Posterior cingulate gyrus (tissue), 11 donors: ENCODE measurements at regions of chr11 and their contacts with region 1.

Region 1: GRCh38 chr11:447923-448731 is 2.0 kb upstream of the PTDSS2 start:
- DNase-seq: peak; percentile 85 to 99 (median 92)

Region 2: DNA sequence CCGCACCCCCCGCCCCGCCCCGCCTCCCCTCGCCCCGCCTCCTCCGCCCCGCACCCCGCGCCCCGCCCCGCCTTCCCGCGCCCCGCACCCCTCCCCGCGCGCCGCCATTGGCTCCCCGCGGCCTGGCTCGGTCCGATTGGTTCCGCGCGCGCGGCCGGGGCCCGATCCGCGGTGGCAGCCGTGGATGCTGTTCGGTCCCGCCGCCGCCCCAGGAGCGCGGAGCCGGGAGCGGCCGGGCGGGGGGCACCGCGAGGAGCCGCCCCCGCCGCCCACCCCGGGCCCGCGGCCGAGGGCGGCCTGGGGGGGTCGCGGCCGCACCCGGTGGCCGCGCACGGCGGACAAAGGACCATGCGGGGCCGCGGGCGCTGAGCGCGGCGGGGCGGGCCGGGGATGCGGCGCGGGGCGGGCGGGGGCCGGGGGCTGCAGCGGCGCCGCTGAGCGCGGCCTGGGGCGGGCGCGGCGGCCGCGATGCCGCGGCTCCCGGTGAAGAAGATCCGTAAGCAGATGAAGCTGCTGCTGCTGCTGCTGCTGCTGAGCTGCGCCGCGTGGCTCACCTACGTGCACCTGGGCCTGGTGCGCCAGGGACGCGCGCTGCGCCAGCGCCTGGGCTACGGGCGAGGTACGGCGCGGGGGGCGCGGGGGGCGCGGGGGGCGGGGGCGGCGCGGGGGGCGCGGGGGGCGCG is 78.7 kb before region 1 on chr11 and contains the start of gene B4GALNT4:
- intact Hi-C with region 1: loop called (anchors 5 kb)
- DNase-seq: peak; percentile 48 to 97 (median 78)

Region 3: DNA sequence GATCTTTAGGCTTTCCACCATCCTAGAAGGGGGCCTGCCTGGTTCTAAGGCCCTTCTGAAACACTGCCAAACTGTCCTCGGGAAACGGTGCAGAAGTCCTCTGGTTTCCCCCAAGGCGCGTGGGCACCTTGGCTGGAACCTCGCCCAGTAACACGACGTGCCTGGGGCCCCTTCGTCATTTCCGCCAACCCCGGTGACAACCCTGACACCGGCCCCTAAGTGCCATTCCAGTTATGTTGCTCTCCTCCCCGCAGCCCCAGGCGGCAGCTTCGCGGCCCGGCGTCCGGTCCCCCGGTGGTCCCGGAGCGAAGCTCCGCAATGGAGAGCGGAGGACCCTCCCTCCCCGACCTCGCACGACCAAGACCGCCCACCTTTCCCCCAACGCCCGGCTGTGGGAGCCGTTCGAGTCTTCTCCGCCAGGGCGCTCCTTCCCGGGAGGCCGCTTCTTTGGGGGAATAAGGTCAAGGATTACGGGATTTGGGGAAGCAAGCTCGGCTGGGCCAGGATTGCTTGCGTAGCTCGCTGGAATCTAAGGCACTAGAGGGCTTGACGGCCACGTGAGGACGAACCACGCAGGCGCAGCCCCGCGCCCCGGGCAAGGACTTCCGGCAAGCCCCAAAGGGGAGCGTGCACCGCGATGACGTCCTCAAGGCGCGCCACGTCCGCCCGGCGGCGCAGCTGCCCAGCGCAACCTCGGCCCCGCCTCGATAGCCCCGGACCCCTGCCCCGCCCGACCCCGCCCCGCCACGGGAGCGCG is 58.3 kb after region 1 on chr11:
- intact Hi-C with region 1: loop called (anchors 1 kb)
- DNase-seq: peak; percentile 96 to 100 (median 97)

Region 4: DNA sequence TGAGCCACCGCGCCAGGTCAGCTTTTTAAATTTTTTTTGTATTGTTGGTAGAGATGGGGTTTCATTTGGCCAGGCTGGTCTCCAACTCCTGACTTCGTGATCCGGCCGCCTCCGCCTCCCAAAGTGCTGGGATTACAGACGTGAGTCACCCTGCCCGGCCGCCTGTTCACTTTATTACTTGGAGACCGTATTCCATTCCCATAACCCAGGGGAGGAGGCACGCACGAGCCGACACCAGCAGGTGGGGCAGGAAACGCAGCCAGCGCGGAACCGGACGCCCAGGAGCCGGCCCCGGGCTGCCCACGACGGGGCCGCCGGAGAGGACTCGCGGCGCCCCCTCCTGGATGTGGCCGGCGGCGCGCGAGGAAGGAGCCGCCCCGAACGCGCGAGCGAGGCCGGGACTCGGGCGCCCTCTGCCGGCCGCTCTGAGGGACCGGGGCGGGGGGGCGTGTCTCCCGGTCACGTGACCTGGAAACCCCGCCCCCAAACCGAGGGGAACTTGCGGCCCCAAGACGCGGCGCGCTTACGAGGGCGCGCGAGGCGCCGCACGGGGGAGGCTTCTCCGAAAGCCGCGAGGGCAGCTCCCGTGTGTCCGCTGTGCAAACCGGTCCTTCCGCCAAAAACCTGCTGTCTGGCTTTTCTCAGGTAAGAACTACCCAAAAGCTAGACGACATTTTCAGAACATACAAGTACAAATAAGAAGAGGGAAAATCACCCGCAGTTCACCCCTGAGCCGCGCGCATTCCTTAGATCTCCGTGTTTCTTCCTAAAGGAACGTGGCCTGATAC is 70.5 kb after region 1 on chr11:
- intact Hi-C with region 1: loop called (anchors 5 kb)
- DNase-seq: peak; percentile 54 to 96 (median 76)